Dendritic cell treated with granulocyte-macrophage colony-stimulating factor and Interleukin-4, amounts not matched to agents 40 ng/mL and 50 ng/mL, for 4 days (primary cell): ENCODE measurements at regions of chr10 and their contacts with region 1.

Region 1: GRCh38 chr10:19659920-19660655 is 156.1 kb upstream of the PLXDC2 start:
- H3K4me3 Mint-ChIP-seq: no peak overlapping the region
- H3K27ac Mint-ChIP-seq: no peak overlapping the region
- H3K4me1 Mint-ChIP-seq: peaks cover 9% of the 10 kb centered on the region
- H3K27me3 Mint-ChIP-seq: no peaks in the 10 kb centered on the region

Region 2: DNA sequence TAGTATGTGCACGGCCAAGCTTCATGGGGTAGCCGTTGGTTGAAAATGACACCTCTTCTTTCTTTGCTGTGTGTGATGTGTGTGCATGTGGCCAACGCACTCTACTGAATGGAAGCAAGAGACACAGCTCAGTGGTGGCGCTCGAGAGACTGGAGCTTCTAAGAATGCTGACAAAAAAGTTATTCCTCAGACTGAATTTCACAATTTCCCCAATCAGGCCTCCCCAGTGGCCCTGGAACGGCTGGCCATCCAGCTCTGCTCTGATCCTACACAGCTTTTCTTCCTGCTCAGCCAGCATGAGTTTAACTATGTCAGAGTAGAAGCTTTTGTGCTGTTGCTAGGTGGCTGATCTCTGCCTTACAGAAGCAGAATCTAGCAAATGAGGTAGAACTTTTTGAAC is 30.5 kb before region 1 on chr10:
- intact Hi-C with region 1: loop called (anchors 5 kb)
- H3K4me3 Mint-ChIP-seq: no peak overlapping the region
- H3K27ac Mint-ChIP-seq: peak overlapping the region; percentile 73
- H3K4me1 Mint-ChIP-seq: peaks cover 22% of the 10 kb centered on the region
- H3K27me3 Mint-ChIP-seq: no peaks in the 10 kb centered on the region